Naive thymus-derived CD4-positive, alpha-beta T cell (primary cell): ENCODE measurements at regions of chr7 and their contacts with region 1.

Region 1: DNA sequence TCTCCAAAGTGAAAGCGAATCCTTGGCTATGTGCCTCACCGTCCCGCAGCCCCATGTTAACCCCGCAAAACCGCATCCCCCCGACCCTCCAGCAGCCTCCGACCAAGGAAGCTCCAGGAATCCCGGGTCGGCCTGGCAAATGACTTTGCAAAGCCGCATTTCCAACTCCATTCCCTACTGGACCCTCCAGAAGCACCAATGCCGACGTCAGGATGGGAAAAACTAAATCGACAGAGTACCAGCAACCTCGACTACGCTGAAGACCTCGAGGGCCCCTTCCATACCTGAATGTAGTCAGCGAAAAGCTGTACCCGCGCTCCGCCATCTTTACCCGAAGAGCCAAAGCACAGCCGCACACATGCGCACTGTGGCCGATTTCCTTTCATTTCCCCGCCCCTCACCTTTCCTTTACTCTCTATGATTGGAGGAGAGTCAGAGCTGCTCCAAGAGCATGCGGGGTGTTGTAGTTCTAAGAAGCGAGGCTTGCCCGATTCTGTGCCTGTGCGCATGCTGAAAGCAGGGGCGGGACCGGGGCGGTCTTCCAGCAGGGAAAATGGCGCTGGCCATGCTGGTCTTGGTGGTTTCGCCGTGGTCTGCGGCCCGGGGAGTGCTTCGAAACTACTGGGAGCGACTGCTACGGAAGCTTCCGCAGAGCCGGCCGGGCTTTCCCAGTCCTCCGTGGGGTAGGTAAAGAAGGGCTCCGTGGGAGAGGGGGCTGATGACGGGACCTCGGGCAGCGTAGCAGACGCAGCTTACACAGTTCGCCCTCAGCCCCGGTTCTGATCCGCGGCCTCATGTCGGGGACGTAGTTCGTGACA is at the starts of genes MRPL32 and PSMA2:
- DNase-seq: peak; percentile 83 to 97 (median 94)
- ATAC-seq: peak; percentile 99
- H3K4me3 ChIP-seq: peak within 1 kb of the TSS; percentile 100
- H3K4me3 Mint-ChIP-seq: peak within 1 kb of the TSS; percentile 88 to 100 (median 98)
- H3K27ac ChIP-seq: peak within 1 kb of the TSS; percentile 89
- H3K27ac Mint-ChIP-seq: peak within 1 kb of the TSS; percentile 92 to 100 (median 97)
- H3K4me1 ChIP-seq: peaks cover 24 to 48% of the 10 kb centered on the region in 2 donors
- H3K4me1 Mint-ChIP-seq: peaks cover 31 to 93% (median 71%) of the 10 kb centered on the region in 7 donors
- H3K27me3 ChIP-seq: no peaks in the 10 kb centered on the region
- H3K27me3 Mint-ChIP-seq: no peaks in the 10 kb centered on the region
- total RNA-seq, gene MRPL32: 27.7 to 58.2 (median 53.4) TPM
- total RNA-seq, gene PSMA2: 29.3 to 144 (median 35.3) TPM

Region 2: GRCh38 chr7:42770106-42770505 is 161.9 kb before region 1 on chr7:
- CTCF ChIA-PET with region 1: no interaction called
- POLR2A ChIA-PET with region 1: no interaction called
- intact Hi-C with region 1: no loop called
- DNase-seq: no peak
- ATAC-seq: no peak
- H3K4me3 ChIP-seq: no peak overlapping the region
- H3K4me3 Mint-ChIP-seq: no peak overlapping the region
- H3K27ac ChIP-seq: no peak overlapping the region
- H3K27ac Mint-ChIP-seq: no peak overlapping the region
- H3K4me1 ChIP-seq: no peaks in the 10 kb centered on the region
- H3K4me1 Mint-ChIP-seq: peaks cover 0 to 1% (median 0%) of the 10 kb centered on the region in 7 donors
- H3K27me3 ChIP-seq: no peaks in the 10 kb centered on the region
- H3K27me3 Mint-ChIP-seq: peaks cover 0 to 11% (median 8%) of the 10 kb centered on the region in 5 donors

Region 3: GRCh38 chr7:42886129-42886528 is 45.9 kb before region 1 on chr7:
- CTCF ChIA-PET with region 1: no interaction called
- POLR2A ChIA-PET with region 1: interaction called, 24 read pairs
- intact Hi-C with region 1: loop called (anchors 1 kb)
- DNase-seq: no peak
- ATAC-seq: no peak
- H3K4me3 ChIP-seq: no peak overlapping the region
- H3K4me3 Mint-ChIP-seq: no peak overlapping the region
- H3K27ac ChIP-seq: no peak overlapping the region
- H3K27ac Mint-ChIP-seq: peak overlapping the region in 4 of 9 donors; percentile 27 to 96 (median 54)
- H3K4me1 ChIP-seq: no peaks in the 10 kb centered on the region
- H3K4me1 Mint-ChIP-seq: peaks cover 18 to 34% (median 25%) of the 10 kb centered on the region in 7 donors
- H3K27me3 ChIP-seq: no peaks in the 10 kb centered on the region
- H3K27me3 Mint-ChIP-seq: peaks cover 0 to 3% (median 0%) of the 10 kb centered on the region in 5 donors

Region 4: GRCh38 chr7:42911454-42912447 is 20.3 kb before region 1 on chr7 and contains the start of gene C7orf25:
- CTCF ChIA-PET with region 1: interaction called, 5 read pairs
- POLR2A ChIA-PET with region 1: interaction called, 23 read pairs
- intact Hi-C with region 1: loop called (anchors 1 kb)
- DNase-seq: peak; percentile 92 to 97 (median 95)
- ATAC-seq: peak; percentile 95
- H3K4me3 ChIP-seq: peak within 1 kb of the TSS; percentile 64
- H3K4me3 Mint-ChIP-seq: peak within 1 kb of the TSS; percentile 81 to 98 (median 90)
- H3K27ac ChIP-seq: peak within 1 kb of the TSS; percentile 82
- H3K27ac Mint-ChIP-seq: peak within 1 kb of the TSS; percentile 81 to 95 (median 92)
- H3K4me1 ChIP-seq: peaks cover 9 to 18% of the 10 kb centered on the region in 2 donors
- H3K4me1 Mint-ChIP-seq: peaks cover 28 to 73% (median 53%) of the 10 kb centered on the region in 7 donors
- H3K27me3 ChIP-seq: no peaks in the 10 kb centered on the region
- H3K27me3 Mint-ChIP-seq: no peaks in the 10 kb centered on the region
- total RNA-seq, gene C7orf25: 2.3 to 10.9 (median 5.3) TPM

Region 5: DNA sequence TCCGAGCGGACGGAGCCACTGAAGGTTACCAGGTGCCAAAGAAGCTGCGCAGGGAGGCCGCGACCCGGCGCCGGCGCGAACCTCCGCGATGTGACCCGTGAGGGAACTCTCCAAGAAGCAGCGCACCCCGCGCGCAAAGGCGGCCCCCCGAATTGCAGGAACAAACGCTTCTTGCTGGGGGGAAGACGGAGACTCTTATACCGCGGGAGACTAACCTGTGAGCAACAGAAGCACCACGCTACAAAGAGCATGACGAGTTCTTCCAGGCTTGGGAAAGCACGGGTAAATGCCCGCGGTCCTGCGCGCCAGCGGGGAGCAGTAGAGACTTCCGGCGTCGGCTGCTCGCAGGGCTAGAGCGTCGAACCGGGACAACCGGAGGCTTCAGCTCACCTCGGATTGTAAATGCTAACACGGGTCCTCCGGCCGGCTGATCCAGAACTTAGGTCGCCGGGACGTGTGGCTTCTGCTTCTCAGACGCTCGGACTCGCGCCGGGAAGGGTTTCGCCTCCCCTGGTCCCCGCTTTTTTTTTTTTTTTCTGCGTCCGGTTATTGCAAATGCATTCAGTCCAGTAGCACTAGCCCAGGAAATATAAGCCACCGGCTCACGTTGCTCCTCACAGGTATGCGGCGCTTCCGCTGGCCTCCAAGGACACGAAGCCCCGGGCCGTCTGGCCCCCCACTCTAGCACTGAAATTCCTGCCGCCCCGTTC is 797.3 kb after region 1 on chr7 and contains the start of gene COA1:
- CTCF ChIA-PET with region 1: no interaction called
- POLR2A ChIA-PET with region 1: interaction called, 5 read pairs
- intact Hi-C with region 1: loop called (anchors 2 kb)
- DNase-seq: peak; percentile 61 to 85 (median 81)
- ATAC-seq: peak; percentile 98
- H3K4me3 ChIP-seq: peak within 1 kb of the TSS; percentile 91
- H3K4me3 Mint-ChIP-seq: peak within 1 kb of the TSS; percentile 81 to 96 (median 94)
- H3K27ac ChIP-seq: peak within 1 kb of the TSS; percentile 76
- H3K27ac Mint-ChIP-seq: peak within 1 kb of the TSS; percentile 75 to 95 (median 90)
- H3K4me1 ChIP-seq: peaks cover 15 to 24% of the 10 kb centered on the region in 2 donors
- H3K4me1 Mint-ChIP-seq: peaks cover 27 to 57% (median 38%) of the 10 kb centered on the region in 7 donors
- H3K27me3 ChIP-seq: no peaks in the 10 kb centered on the region
- H3K27me3 Mint-ChIP-seq: peaks cover 0 to 4% (median 0%) of the 10 kb centered on the region in 5 donors
- total RNA-seq, gene COA1: 51.3 to 73.3 (median 64.6) TPM

Region 6: DNA sequence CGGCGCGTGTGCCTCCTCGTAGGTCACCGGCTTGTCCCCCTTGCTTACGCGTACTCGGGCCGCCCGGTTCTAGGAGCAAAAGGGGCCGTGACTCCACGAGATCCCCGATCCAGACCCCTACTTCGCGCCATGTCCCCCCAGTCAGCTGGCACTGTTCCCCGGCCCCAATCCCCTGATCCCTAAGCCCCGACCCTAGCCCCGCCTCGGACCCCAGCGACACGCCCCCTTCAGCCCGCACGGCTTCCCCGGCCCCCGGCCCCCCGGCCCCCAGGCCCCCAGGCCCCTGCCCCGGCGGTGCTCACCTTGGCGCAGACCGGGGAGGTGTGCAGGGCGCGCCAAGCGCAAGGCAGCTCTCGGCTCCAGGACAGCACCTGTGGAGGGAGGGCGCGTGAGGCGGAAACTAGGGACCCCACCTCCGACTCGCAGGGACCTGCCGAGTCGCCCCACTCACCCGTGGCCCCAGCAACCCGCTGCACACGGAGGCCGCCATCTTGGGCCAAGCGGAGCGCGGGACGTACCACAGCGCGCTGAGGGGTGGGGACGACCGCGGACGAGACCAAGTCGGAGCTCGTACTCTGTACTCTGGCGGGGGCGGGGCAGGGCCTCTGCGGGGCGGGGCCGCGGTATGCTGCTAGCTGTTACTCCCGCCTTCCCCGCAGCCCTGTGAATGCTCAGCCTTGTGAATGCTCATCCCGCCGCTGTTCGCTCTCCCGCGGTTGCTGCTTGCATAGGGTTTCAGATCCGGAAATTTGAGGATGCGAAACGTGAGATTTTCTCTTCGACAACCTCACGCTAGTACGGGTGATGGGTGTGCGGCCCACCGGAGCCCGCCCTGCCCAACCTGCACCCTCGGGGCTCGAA is 937.2 kb after region 1 on chr7 and contains the start of gene MRPS24:
- CTCF ChIA-PET with region 1: no interaction called
- POLR2A ChIA-PET with region 1: interaction called, 3 read pairs
- intact Hi-C with region 1: loop called in 1 of 2 experiments (anchors 1 kb)
- DNase-seq: peak; percentile 84 to 95 (median 92)
- ATAC-seq: peak; percentile 100
- H3K4me3 ChIP-seq: peak within 1 kb of the TSS; percentile 92
- H3K4me3 Mint-ChIP-seq: peak within 1 kb of the TSS; percentile 88 to 97 (median 95)
- H3K27ac ChIP-seq: peak within 1 kb of the TSS; percentile 78
- H3K27ac Mint-ChIP-seq: peak within 1 kb of the TSS; percentile 86 to 97 (median 90)
- H3K4me1 ChIP-seq: peaks cover 13 to 15% of the 10 kb centered on the region in 2 donors
- H3K4me1 Mint-ChIP-seq: peaks cover 0 to 24% (median 22%) of the 10 kb centered on the region in 7 donors
- H3K27me3 ChIP-seq: no peaks in the 10 kb centered on the region
- H3K27me3 Mint-ChIP-seq: no peaks in the 10 kb centered on the region
- total RNA-seq, gene MRPS24: 44.2 to 76.6 (median 62.3) TPM